ENCODE measurements at regions of chrX and their contacts with region 1.

Region 1: DNA sequence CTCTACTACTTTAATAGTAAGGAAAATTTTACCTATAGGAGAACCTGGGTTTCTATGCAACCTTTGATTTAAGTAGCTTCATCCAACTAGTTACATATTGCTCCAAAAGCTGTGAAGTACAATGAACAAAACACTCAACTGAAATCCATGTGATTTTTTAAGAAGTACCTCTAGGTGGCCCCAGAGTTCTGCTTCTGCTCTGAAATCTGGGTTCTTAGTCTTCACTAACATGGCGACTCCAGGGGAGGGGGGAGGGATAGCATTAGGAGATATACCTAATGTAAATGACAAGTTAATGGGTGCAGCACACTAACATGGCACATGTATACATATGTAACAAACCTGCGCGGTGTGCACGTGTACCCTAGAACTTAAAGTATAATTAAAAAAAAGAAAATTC is 73.4 kb upstream of the MAGEB2 start:
- DNase-seq: peak; percentile 3
- ATAC-seq: no peak
- H3K4me3 Mint-ChIP-seq: no peak overlapping the region
- H3K27ac Mint-ChIP-seq: no peak overlapping the region
- H3K4me1 Mint-ChIP-seq: no peaks in the 10 kb centered on the region
- H3K27me3 Mint-ChIP-seq: no peaks in the 10 kb centered on the region
- CTCF ChIP-seq: no peak

Region 2: DNA sequence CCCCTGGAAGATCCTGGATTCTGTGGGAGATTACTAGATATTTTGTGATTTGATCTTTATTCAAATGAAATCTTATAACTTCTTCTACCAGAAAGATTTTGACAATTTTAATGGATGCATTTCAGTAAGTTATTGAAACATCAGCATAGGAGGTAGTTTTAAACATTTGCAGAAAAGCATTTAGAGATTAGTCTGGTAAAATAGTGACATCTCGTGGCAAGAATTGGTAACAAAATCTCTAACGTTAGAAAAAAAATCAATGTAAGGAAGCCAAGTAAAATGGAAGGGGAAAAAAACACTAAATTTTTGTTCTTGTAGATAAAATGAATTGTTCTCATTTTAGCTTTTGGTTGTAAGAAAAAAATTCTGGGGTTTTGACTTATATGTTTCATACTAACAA is 362.3 kb after region 1 on chrX:
- CTCF ChIA-PET with region 1: no interaction called
- POLR2A ChIA-PET with region 1: no interaction called
- intact Hi-C with region 1: loop called (anchors 10 kb)
- DNase-seq: no peak
- ATAC-seq: no peak
- H3K4me3 Mint-ChIP-seq: no peak overlapping the region
- H3K27ac Mint-ChIP-seq: no peak overlapping the region
- H3K4me1 Mint-ChIP-seq: no peaks in the 10 kb centered on the region
- H3K27me3 Mint-ChIP-seq: no peaks in the 10 kb centered on the region
- CTCF ChIP-seq: no peak